GM13976 (cell line): ENCODE measurements at regions of chr11 and their contacts with region 1.

Region 1: DNA sequence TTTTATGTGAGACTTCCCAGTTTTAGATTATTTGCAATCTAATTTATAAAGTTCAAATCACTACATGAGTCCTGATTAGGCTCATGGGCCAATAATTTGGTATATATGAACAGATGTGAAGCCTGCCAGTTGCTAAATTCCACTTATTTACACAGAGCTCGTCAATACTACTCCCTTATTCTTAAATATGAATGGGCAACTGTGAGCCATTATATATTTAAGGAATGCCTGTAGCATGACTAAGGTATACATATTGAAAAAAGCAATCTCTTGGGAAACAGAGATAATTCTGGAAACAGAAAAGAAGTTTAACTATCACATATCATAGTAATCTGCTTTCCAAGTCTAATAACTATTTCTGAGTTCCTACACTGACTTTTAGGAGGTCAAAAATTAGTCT is 27.0 kb downstream of the RBMXL2 start:
- DNase-seq: no peak
- CTCF ChIP-seq: no peak

Region 2: DNA sequence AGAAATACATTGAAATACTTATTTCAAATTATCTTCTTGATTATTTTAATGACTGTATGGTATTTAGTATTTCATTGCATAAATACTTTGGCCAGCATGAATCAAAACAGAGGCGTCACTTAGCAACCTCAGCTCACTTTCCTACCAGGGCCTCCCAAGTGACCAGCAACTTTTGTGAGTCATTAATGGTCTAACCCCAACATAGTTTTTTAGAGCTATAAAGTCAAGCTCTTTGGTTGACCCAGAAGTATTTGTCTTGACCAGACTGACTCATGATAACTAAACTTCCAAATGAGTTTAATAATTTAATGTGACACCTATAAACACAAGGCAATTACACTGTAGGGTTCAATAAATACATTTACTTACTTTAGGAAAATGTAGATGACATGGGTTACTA is 54.9 kb before region 1 on chr11:
- in situ Hi-C with region 1: no loop called
- DNase-seq: no peak
- CTCF ChIP-seq: no peak

Region 3: GRCh38 chr11:7485186-7486097 is 369.7 kb after region 1 on chr11 and contains the start of gene OLFML1:
- in situ Hi-C with region 1: no loop called
- DNase-seq: no peak
- CTCF ChIP-seq: no peak

Region 4: GRCh38 chr11:7688238-7688826 is 572.6 kb after region 1 on chr11:
- in situ Hi-C with region 1: loop called (anchors 25 kb)
- DNase-seq: no peak
- CTCF ChIP-seq: peak; percentile 66